ENCODE measurements at regions of chr12 and their contacts with region 1.

Region 1: DNA sequence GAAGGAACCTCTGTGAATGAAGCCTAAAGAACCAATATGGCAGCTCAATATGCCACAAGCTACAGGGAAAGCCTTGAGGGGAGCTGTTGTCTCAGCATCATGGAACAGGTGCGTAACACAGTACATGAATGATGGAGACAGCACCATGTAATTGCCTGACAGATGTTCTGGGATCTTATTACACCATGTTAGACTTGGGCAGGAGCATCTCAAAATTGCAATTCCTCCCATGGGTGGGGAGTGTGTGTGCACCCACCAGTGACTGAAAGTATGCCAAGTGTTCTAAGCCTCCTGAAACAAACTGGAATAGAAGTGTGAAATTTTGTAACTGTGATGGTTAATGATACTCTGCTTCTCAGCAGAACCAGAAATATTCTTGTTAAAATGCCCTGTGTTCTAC is 151.0 kb upstream of the SRRM4 start:
- DNase-seq: no peak
- H3K4me3 ChIP-seq: no peak overlapping the region
- H3K27ac ChIP-seq: no peak overlapping the region
- H3K4me1 ChIP-seq: no peaks in the 10 kb centered on the region
- H3K27me3 ChIP-seq: no peaks in the 10 kb centered on the region
- CTCF ChIP-seq: no peak
- EP300 ChIP-seq: no peak
- POLR2A ChIP-seq: no peak

Region 2: DNA sequence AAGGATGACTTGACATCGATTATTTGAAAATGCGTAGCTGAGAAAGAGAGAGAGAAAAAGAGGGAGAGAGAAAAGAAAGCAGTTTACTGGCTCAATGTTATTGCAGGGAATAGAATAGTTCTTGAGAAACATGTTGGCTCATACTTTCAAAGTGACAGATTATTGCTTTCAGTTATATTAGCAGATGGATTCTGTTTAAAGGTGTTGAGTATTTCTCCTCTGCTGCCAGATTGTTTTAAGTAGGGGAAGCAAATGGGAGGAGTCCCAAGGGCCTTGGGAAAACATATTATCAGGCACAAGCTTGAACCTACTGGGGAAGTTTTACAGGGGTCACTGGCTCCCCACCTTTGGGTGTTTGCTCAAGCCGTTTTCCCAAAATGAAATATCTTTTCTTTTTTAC is 52.8 kb before region 1 on chr12:
- in situ Hi-C with region 1: no loop called
- intact Hi-C with region 1: no loop called
- DNase-seq: no peak
- H3K4me3 ChIP-seq: no peak overlapping the region
- H3K27ac ChIP-seq: no peak overlapping the region
- H3K4me1 ChIP-seq: no peaks in the 10 kb centered on the region
- H3K27me3 ChIP-seq: peaks cover 17% of the 10 kb centered on the region
- CTCF ChIP-seq: no peak
- EP300 ChIP-seq: no peak
- POLR2A ChIP-seq: no peak

Region 3: DNA sequence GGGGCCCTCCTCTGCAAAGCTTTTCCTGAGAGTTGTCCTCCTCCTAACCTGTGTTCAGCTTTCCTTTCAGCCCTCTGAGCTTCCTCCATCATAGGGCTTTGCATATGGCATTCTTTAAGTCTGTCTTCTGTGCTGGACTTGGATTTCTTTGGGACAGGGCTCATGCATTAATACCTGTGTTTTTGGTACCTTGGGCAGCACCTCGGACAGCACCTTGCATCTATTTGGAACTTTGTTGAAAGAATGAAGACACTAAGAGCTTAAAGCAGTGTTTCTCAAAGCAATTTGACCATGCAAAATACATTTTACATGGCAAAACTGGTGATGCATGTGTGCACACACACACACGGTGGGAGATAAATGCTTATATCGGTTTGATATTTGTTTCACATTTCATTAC is 36.0 kb after region 1 on chr12:
- in situ Hi-C with region 1: no loop called
- intact Hi-C with region 1: loop called (anchors 1 kb)
- DNase-seq: no peak
- H3K4me3 ChIP-seq: no peak overlapping the region
- H3K27ac ChIP-seq: no peak overlapping the region
- H3K4me1 ChIP-seq: no peaks in the 10 kb centered on the region
- H3K27me3 ChIP-seq: no peaks in the 10 kb centered on the region
- CTCF ChIP-seq: no peak
- EP300 ChIP-seq: no peak
- POLR2A ChIP-seq: no peak

Measured in transverse colon (tissue), 4 donors.